PC-9 (cell line): ENCODE measurements at regions of chr22 and their contacts with region 1.

Region 1: GRCh38 chr22:37345863-37346504 is 63.7 kb downstream of the CYTH4 start:
- DNase-seq: peak in 1 of 2 experiments; percentile 52
- H3K4me3 ChIP-seq: no peak overlapping the region
- H3K27ac ChIP-seq: no peak overlapping the region
- H3K4me1 ChIP-seq: peaks cover 13% of the 10 kb centered on the region
- H3K27me3 ChIP-seq: no peaks in the 10 kb centered on the region
- CTCF ChIP-seq: no peak

Region 2: DNA sequence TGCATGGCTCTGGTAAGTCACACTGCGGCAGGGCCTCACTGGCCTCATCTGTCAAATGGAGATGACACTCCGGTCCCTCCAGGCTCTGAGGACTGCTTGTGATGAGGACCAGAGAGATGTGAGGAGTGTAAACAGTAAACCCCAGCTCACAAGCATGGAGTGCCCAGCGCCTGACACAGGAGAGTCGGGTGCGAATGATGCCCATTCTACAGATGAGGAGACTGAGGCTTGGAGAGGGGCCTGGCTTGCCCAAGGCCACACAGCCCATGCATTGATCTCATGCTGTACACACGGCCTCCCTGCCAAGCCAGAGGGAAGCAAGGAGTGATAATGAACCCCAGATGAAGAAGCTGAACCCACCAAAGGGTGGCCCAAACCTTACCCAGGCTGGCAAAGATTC is 44.1 kb after region 1 on chr22:
- CTCF ChIA-PET with region 1: no interaction called
- POLR2A ChIA-PET with region 1: interaction called, 17 read pairs
- intact Hi-C with region 1: no loop called
- DNase-seq: no peak
- H3K4me3 ChIP-seq: no peak overlapping the region
- H3K27ac ChIP-seq: no peak overlapping the region
- H3K4me1 ChIP-seq: no peaks in the 10 kb centered on the region
- H3K27me3 ChIP-seq: no peaks in the 10 kb centered on the region
- CTCF ChIP-seq: no peak